GM18951 (cell line): ENCODE measurements at regions of chr15 and their contacts with region 1.

Region 1: GRCh38 chr15:94230956-94231722 is at the start of gene MCTP2:
- POLR2A ChIP-seq: peak; percentile 73

Region 2: GRCh38 chr15:94306700-94307650 is 75.8 kb after region 1 on chr15:
- in situ Hi-C with region 1: loop called (anchors 10 kb)
- POLR2A ChIP-seq: no peak